ENCODE measurements at regions of chr4 and their contacts with region 1.

Region 1: GRCh38 chr4:168480931-168481611 is 779 bp upstream of the DDX60L start:
- DNase-seq: peak; percentile 81
- H3K4me3 ChIP-seq: peak overlapping the region; percentile 75 to 83 (median 83)
- H3K27ac ChIP-seq: peak overlapping the region; percentile 98
- H3K4me1 ChIP-seq: peaks cover 26% of the 10 kb centered on the region
- H3K27me3 ChIP-seq: no peaks in the 10 kb centered on the region
- CTCF ChIP-seq: no peak

Region 2: GRCh38 chr4:168380290-168380689 is 100.8 kb before region 1 on chr4:
- CTCF ChIA-PET with region 1: no interaction called
- dilution Hi-C with region 1: no loop called
- in situ Hi-C with region 1: no loop called
- intact Hi-C with region 1: no loop called
- DNase-seq: no peak
- H3K4me3 ChIP-seq: no peak overlapping the region
- H3K27ac ChIP-seq: no peak overlapping the region
- H3K4me1 ChIP-seq: no peaks in the 10 kb centered on the region
- H3K27me3 ChIP-seq: no peaks in the 10 kb centered on the region
- CTCF ChIP-seq: no peak

Region 3: GRCh38 chr4:168408620-168409019 is 72.5 kb before region 1 on chr4:
- CTCF ChIA-PET with region 1: interaction called, 11 read pairs
- dilution Hi-C with region 1: no loop called
- in situ Hi-C with region 1: no loop called
- intact Hi-C with region 1: loop called (anchors 5 kb)
- DNase-seq: peak; percentile 88
- H3K4me3 ChIP-seq: no peak overlapping the region
- H3K27ac ChIP-seq: peak overlapping the region; percentile 47
- H3K4me1 ChIP-seq: peaks cover 17% of the 10 kb centered on the region
- H3K27me3 ChIP-seq: no peaks in the 10 kb centered on the region
- CTCF ChIP-seq: no peak

Region 4: DNA sequence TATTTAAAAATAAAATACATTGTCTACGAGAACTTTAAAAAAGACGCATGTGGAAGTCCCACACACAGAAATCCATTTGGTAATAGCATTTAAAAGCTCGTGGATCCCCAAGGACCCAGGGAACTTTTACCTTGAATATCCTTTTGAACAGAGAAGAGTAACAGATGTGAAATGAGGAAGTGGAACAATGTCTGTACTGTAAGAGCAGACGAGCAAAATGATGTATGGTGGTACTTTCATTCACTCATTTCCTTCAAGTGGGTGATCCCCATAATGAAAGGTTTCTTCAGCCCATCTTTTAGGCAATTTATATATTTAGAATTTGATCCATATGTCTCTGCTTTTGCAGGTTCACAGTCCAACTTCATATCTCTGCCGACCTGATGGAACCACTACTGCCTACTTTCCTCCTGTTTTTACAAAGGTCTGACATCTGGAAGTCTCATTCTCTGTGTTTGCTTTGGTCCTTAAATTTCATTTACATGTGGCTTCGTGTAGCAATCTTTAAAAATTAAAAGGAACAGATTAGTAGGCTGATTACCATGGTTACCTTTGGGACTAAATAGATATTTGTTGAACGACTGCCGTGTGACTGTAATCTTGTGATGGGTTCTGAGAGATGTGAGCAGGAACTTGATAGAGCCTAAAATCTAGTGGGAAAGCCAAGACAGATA is 204.2 kb after region 1 on chr4:
- CTCF ChIA-PET with region 1: no interaction called
- dilution Hi-C with region 1: no loop called
- in situ Hi-C with region 1: no loop called
- intact Hi-C with region 1: no loop called
- DNase-seq: no peak
- H3K4me3 ChIP-seq: no peak overlapping the region
- H3K27ac ChIP-seq: no peak overlapping the region
- H3K4me1 ChIP-seq: peaks cover 4% of the 10 kb centered on the region
- H3K27me3 ChIP-seq: no peaks in the 10 kb centered on the region
- CTCF ChIP-seq: no peak

Region 5: GRCh38 chr4:168847771-168848511 is 366.9 kb after region 1 on chr4:
- CTCF ChIA-PET with region 1: no interaction called
- dilution Hi-C with region 1: no loop called
- in situ Hi-C with region 1: no loop called
- intact Hi-C with region 1: loop called (anchors 10 kb)
- DNase-seq: peak; percentile 47
- H3K4me3 ChIP-seq: peak overlapping the region in 1 of 3 experiments; percentile 41
- H3K27ac ChIP-seq: peak overlapping the region; percentile 67
- H3K4me1 ChIP-seq: peaks cover 49% of the 10 kb centered on the region
- H3K27me3 ChIP-seq: no peaks in the 10 kb centered on the region
- CTCF ChIP-seq: no peak